PC-9 (cell line): ENCODE measurements at regions of chr5 and their contacts with region 1.

Region 1: DNA sequence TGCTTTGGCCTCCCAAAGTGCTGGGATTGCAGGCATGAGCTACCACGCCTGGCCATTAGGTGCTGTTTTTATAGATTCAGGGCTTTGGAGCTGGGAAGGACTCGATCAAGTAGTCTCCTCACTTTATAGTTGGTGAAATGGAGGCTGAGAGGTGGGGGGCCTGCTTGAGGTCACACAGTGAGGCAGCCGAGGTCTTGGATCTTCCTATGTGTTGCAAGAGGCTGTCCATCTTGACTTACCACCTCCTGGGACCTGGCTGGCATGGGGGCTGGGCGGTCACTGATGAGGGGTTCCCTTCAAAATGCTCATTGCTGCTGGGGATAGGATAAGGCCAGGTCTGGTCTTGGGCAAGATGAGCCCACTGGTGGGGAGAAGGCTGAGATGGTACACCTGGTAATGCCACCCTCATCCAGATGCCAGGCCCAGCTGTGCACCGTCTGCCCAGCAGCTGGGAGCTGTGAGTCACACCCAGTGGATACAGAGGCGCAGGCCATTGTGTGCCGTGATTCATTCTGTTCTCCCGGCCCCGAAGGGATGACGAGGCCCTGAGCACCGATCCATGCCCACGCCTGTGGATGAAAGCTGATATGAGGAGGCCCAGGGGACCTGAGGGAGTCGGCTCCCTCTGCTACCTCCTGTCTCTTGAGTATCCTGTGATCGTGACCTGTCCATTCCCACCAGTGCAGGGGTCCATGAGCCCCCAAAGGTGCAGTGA is 10.5 kb upstream of the NDST1 start:
- DNase-seq: peak; percentile 81 to 87
- H3K4me3 ChIP-seq: no peak overlapping the region
- H3K27ac ChIP-seq: no peak overlapping the region
- H3K4me1 ChIP-seq: peaks cover 25% of the 10 kb centered on the region
- H3K27me3 ChIP-seq: no peaks in the 10 kb centered on the region
- CTCF ChIP-seq: no peak

Region 2: GRCh38 chr5:150512368-150512747 is 14.9 kb after region 1 on chr5:
- CTCF ChIA-PET with region 1: interaction called, 11 read pairs
- POLR2A ChIA-PET with region 1: interaction called, 9 read pairs
- intact Hi-C with region 1: loop called (anchors 1 kb)
- DNase-seq: no peak
- H3K4me3 ChIP-seq: no peak overlapping the region
- H3K27ac ChIP-seq: no peak overlapping the region
- H3K4me1 ChIP-seq: peaks cover 56% of the 10 kb centered on the region
- H3K27me3 ChIP-seq: no peaks in the 10 kb centered on the region
- CTCF ChIP-seq: no peak

Region 3: GRCh38 chr5:150517272-150518152 is 20.1 kb after region 1 on chr5:
- CTCF ChIA-PET with region 1: interaction called, 11 read pairs
- POLR2A ChIA-PET with region 1: interaction called, 9 read pairs
- intact Hi-C with region 1: loop called (anchors 1 kb)
- DNase-seq: peak; percentile 96 to 100
- H3K4me3 ChIP-seq: no peak overlapping the region
- H3K27ac ChIP-seq: peak overlapping the region; percentile 72
- H3K4me1 ChIP-seq: peaks cover 45% of the 10 kb centered on the region
- H3K27me3 ChIP-seq: no peaks in the 10 kb centered on the region
- CTCF ChIP-seq: no peak

Region 4: DNA sequence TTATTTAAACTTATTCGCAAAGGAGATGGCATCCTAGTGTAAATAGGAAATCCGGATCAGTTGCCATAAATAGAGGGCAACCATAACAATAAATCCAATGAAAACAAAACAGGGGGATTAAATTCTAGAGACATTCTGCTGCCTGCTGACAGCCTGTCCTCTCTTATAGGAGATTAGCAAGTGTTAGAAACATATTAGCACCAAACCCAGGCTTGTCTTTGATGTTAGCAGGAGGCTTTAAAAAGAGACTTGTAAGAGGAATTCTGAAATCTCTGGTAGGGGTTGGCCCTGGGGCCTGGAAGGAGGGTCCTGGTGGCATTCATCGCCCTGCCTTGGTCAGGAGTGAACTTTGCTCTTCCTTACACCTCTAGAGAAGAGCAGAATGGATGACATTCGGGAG is 32.1 kb after region 1 on chr5:
- CTCF ChIA-PET with region 1: no interaction called
- POLR2A ChIA-PET with region 1: no interaction called
- intact Hi-C with region 1: no loop called
- DNase-seq: no peak
- H3K4me3 ChIP-seq: no peak overlapping the region
- H3K27ac ChIP-seq: no peak overlapping the region
- H3K4me1 ChIP-seq: no peaks in the 10 kb centered on the region
- H3K27me3 ChIP-seq: no peaks in the 10 kb centered on the region
- CTCF ChIP-seq: no peak

Region 5: DNA sequence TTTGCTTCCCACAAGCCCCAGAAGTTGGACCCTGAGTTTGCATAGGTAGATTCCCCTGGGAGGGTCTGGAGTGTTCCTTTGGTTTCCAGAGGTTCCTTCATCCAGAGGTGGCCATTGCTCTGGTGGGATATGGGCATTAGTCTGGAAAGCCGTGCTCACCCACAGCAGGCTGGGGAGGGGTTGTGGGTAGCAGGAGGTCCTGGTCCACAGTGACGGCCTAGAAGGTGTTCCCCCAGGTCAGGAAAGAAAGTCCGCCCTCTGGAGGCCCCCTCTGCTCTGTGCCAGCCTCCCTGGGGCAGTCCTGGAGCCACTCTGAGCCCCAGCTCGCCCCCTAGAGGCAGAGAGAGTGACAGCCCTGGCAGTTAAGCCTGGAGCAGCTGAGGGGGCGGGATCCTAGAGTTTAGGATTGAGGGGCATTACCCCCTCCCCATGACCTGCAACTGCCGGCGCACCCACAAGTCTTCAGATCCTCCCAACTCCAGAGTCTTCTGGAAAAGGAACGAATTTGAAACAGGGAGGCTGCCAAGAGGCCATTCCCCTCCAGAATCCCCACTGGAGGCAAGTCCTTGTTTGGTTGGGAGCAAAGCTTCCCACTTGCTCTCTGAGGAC is 47.3 kb after region 1 on chr5:
- CTCF ChIA-PET with region 1: no interaction called
- POLR2A ChIA-PET with region 1: interaction called, 3 read pairs
- intact Hi-C with region 1: loop called (anchors 2 kb)
- DNase-seq: peak in 1 of 2 experiments; percentile 63
- H3K4me3 ChIP-seq: no peak overlapping the region
- H3K27ac ChIP-seq: no peak overlapping the region
- H3K4me1 ChIP-seq: no peaks in the 10 kb centered on the region
- H3K27me3 ChIP-seq: no peaks in the 10 kb centered on the region
- CTCF ChIP-seq: peak; percentile 87